ENCODE measurements at regions of chr4 and their contacts with region 1.

Region 1: DNA sequence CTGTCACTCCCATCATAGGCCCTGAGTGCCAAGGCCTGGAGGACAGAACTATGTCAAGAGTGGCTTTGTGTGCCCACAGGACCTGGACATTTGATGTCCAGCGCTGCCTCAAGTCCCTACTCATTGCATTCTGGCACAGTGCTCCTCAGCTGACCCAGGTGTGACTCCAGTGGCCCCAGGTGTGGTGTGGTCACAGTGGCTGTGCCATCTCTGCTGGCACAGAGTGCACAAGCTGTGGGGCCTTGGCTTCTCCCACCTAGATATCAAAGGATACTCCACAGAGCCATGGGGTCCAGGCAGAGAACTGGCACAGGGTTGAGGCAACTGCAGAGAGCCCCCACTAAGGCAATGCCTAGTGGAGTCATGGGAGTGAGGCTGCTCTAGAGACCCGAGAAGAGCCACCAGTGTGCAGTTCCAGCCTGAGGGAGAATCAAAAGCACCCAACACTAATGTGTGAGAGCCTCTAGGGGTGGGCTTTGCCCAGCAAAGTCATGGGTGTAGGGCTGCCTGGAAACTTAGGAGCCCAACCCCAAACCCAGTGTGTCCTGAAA is 25.6 kb downstream of the PYURF start:
- DNase-seq: no peak
- ATAC-seq: no peak
- H3K4me3 Mint-ChIP-seq: no peak overlapping the region
- H3K27ac Mint-ChIP-seq: no peak overlapping the region
- H3K4me1 Mint-ChIP-seq: no peaks in the 10 kb centered on the region
- H3K27me3 Mint-ChIP-seq: no peaks in the 10 kb centered on the region
- CTCF ChIP-seq: no peak

Region 2: GRCh38 chr4:88481537-88481936 is 16.4 kb before region 1 on chr4:
- CTCF ChIA-PET with region 1: no interaction called
- POLR2A ChIA-PET with region 1: no interaction called
- intact Hi-C with region 1: loop called (anchors 1 kb)
- DNase-seq: no peak
- ATAC-seq: no peak
- H3K4me3 Mint-ChIP-seq: no peak overlapping the region
- H3K27ac Mint-ChIP-seq: no peak overlapping the region
- H3K4me1 Mint-ChIP-seq: no peaks in the 10 kb centered on the region
- H3K27me3 Mint-ChIP-seq: no peaks in the 10 kb centered on the region
- CTCF ChIP-seq: no peak